Esophagus muscularis mucosa (tissue), 4 donors: ENCODE measurements at regions of chr6 and their contacts with region 1.

Region 1: GRCh38 chr6:16332175-16332542 is 93.8 kb downstream of the GMPR start:
- DNase-seq: no peak
- H3K4me3 ChIP-seq: no peak overlapping the region
- H3K27ac ChIP-seq: no peak overlapping the region
- H3K4me1 ChIP-seq: peaks cover 41 to 50% (median 50%) of the 10 kb centered on the region in 4 donors
- H3K27me3 ChIP-seq: no peaks in the 10 kb centered on the region
- CTCF ChIP-seq: peak; percentile 90 to 95 (median 91)
- EP300 ChIP-seq: no peak
- POLR2A ChIP-seq: no peak

Region 2: DNA sequence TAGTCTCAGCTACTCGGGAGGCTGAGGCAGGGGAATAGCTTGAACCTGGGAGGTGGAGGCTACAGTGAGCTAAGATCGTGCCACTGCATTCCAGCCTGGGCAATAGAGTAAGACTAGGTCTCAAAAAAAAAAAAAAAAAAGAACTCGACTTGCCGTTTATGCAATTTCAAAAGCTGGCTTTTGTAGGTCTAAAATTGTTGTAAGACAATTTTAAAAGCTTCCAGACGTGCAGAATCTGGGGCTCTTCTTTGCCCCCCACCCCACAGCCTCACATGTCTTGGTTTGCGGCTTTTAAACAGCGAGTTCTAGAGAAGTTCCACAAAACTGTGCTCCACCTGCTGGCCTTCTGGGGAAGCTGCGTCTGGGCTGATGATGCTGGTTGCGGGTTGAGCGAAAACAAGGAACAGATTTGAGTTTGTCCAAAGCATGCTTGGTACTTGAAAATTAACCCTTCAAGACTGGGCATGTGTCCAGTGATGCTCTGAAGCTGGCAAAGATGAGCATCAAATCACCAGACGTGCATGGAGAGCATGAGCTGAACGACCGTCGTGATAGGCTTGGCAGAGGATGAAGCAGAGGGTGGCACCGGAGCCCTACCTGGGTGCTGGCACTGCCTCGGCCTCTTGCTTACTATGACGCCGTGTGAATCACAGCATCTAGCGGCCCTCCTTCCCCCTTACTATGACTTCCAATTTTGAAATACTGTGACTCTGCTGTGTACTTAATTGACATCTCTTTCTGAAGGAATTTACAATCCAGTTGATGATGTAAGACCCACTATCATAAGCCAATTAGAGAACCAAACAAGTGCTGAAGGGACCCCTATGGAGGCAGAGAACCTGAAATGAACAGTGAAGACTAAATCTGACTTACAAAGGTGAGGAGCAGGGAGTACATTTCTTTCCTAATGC is 77.6 kb after region 1 on chr6:
- intact Hi-C with region 1: loop called (anchors 1 kb)
- DNase-seq: peak; percentile 94
- H3K4me3 ChIP-seq: no peak overlapping the region
- H3K27ac ChIP-seq: no peak overlapping the region
- H3K4me1 ChIP-seq: peaks cover 12 to 38% (median 17%) of the 10 kb centered on the region in 4 donors
- H3K27me3 ChIP-seq: no peaks in the 10 kb centered on the region
- CTCF ChIP-seq: peak; percentile 66 to 82 (median 68)
- EP300 ChIP-seq: no peak
- POLR2A ChIP-seq: no peak

Region 3: DNA sequence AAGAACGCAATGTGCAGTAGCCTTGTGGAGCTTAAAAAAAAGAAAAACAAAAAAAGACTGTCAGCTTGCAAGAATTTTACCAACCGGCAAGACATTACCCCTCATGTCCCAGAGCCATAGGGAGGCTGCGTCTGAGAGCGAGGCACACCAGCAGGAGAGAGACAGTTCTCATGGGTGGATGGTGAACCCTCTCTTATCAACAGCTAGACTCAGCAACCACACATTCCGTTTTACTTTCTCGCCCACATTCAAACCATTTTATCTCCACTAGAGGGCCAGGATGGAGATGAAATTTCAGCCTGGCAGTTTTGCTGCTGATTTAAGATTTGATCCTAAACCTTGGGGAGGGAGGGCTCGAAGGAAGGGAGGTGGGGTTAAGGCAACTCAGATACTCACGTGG is 182.1 kb after region 1 on chr6:
- intact Hi-C with region 1: loop called (anchors 5 kb)
- DNase-seq: no peak
- H3K4me3 ChIP-seq: no peak overlapping the region
- H3K27ac ChIP-seq: no peak overlapping the region
- H3K4me1 ChIP-seq: peaks cover 21 to 34% (median 29%) of the 10 kb centered on the region in 4 donors
- H3K27me3 ChIP-seq: no peaks in the 10 kb centered on the region
- CTCF ChIP-seq: peak in 1 of 3 experiments; percentile 37
- EP300 ChIP-seq: no peak
- POLR2A ChIP-seq: no peak

Region 4: DNA sequence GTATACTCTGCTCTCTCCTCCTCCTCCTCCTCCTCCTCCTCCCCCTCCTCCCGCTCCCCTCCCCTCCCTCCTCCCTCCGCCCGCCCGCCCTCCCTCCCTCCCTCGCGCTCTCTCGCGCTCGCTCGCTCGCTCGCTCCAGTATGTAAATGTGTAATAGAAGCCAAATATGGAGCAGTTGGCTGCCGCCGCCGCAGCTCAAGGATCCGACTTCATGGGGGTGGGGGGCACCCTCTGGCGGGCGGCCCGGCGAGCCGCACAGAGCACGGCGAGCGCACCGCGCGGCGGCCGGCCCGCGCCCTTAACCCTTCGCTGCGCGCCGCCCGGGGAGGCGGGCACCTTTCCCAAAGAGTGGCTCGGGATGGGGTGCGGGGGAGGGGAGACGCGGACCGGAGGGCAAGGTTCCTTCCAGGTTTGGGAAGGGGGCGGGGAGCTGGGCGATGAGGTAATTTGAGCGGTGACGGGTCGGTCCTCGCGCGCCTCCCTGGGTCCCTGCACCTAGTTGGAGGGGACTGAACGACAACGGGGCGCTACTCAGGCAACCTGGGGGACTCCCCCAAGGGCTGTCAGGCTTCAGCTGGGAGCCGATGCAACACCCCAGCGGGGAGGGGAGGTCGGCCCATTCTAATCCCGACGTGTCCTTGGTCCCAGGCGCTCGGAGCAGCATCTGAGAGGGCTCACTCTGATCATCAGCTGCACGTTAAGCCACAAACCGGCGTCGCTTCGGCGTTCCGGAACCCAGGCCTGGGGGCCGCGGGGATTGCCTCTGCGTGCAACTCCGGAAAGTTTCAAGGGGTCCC is 429.5 kb after region 1 on chr6:
- intact Hi-C with region 1: loop called (anchors 5 kb)
- DNase-seq: peak; percentile 97
- H3K4me3 ChIP-seq: peak overlapping the region; percentile 94 to 100 (median 96)
- H3K27ac ChIP-seq: peak overlapping the region; percentile 99 to 100 (median 100)
- H3K4me1 ChIP-seq: peaks cover 27 to 54% (median 47%) of the 10 kb centered on the region in 4 donors
- H3K27me3 ChIP-seq: no peaks in the 10 kb centered on the region
- CTCF ChIP-seq: peak in 2 of 3 experiments; percentile 34 to 38
- EP300 ChIP-seq: no peak
- POLR2A ChIP-seq: no peak

Region 5: GRCh38 chr6:17484201-17484849 is 1152.2 kb after region 1 on chr6:
- intact Hi-C with region 1: no loop called
- DNase-seq: peak; percentile 21
- H3K4me3 ChIP-seq: no peak overlapping the region
- H3K27ac ChIP-seq: no peak overlapping the region
- H3K4me1 ChIP-seq: peaks cover 0 to 13% (median 8%) of the 10 kb centered on the region in 4 donors
- H3K27me3 ChIP-seq: no peaks in the 10 kb centered on the region
- CTCF ChIP-seq: no peak
- EP300 ChIP-seq: no peak
- POLR2A ChIP-seq: no peak